Astrocyte of the cerebellum (primary cell): ENCODE measurements at regions of chr11 and their contacts with region 1.

Region 1: DNA sequence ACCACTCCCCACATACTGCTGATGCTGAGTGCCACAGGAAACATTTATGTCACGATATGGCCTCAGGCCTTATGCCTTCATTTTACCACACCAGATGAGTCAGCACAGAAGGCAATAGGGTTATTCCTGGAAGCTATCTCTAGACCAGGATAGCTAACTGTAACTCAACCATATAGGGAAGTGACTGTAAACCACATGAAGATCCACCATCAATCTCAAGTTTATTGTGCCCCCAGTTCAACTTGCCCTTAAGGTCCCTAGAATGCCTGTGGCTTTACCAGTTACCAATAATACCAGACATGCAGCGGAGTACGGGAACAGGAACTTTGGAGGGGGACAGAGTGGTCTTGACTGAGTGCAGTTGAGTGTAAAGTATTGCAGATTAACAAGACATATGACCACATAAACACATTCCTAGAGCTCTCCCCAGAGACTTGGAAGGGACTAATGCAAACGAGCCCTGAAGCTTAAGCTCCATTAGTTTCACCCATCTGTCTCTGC is 180.9 kb downstream of the KIF18A start:
- DNase-seq: peak; percentile 83
- H3K4me3 ChIP-seq: no peak overlapping the region
- CTCF ChIP-seq: no peak

Region 2: GRCh38 chr11:27720277-27720830 is 206.7 kb before region 1 on chr11:
- in situ Hi-C with region 1: loop called (anchors 10 kb)
- DNase-seq: no peak
- H3K4me3 ChIP-seq: no peak overlapping the region
- CTCF ChIP-seq: peak; percentile 39